Caco-2 (cell line): ENCODE measurements at regions of chr7 and their contacts with region 1.

Region 1: GRCh38 chr7:98294796-98295382 is 13.4 kb downstream of the BRI3 start:
- DNase-seq: peak; percentile 82 to 88
- H3K4me3 ChIP-seq: no peak overlapping the region
- H3K4me3 Mint-ChIP-seq: no peak overlapping the region
- H3K27ac Mint-ChIP-seq: peak overlapping the region; percentile 85
- H3K4me1 ChIP-seq: peaks cover 9% of the 10 kb centered on the region
- H3K4me1 Mint-ChIP-seq: peaks cover 16% of the 10 kb centered on the region
- H3K27me3 ChIP-seq: no peaks in the 10 kb centered on the region
- H3K27me3 Mint-ChIP-seq: no peaks in the 10 kb centered on the region
- CTCF ChIP-seq: peak; percentile 84 to 89

Region 2: GRCh38 chr7:98323597-98324322 is 28.9 kb after region 1 on chr7:
- CTCF ChIA-PET with region 1: no interaction called
- POLR2A ChIA-PET with region 1: no interaction called
- intact Hi-C with region 1: no loop called
- DNase-seq: no peak
- H3K4me3 ChIP-seq: no peak overlapping the region
- H3K4me3 Mint-ChIP-seq: no peak overlapping the region
- H3K27ac Mint-ChIP-seq: peak overlapping the region; percentile 85
- H3K4me1 ChIP-seq: peaks cover 31% of the 10 kb centered on the region
- H3K4me1 Mint-ChIP-seq: peaks cover 41% of the 10 kb centered on the region
- H3K27me3 ChIP-seq: no peaks in the 10 kb centered on the region
- H3K27me3 Mint-ChIP-seq: no peaks in the 10 kb centered on the region
- CTCF ChIP-seq: no peak

Region 3: DNA sequence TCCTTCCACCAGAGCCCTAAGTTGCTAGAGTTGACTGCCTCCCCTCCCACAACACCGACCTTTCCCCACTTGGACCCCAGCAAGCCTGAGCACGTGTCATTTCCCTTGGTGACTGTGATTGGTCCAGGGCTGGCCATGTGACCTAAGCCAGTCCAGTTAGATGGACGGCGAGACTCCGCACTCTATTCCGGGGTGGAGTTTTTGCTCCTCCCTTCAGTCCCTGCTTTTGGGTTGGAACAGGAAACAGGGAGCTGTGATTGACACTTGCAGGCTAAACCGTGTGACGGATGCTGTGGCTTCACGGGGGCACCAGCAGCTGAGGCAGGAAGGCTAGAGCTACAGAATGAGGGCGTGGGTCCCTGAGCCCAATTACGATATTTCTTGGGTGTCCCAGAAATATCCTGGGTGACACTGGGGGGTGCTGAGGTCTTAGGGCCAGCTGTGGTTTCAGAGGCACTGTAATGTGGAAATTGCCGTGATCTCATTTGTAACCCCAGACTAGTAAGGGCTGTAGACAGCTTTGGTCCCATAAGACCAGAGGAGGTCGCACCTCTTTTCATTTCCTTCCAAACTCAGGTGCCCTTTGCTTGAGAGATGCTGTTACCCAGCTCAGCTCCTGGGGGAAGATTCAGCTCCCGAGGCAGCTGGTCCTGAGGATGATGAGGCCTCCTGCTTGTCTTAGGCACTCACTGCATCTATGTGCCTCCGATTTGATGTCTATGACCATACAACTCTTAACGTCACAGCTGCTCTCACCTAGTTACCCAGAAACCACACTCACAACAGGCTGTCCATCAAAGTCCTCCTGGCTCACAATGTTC is 219.5 kb after region 1 on chr7:
- CTCF ChIA-PET with region 1: no interaction called
- POLR2A ChIA-PET with region 1: no interaction called
- intact Hi-C with region 1: no loop called
- DNase-seq: no peak
- H3K4me3 ChIP-seq: no peak overlapping the region
- H3K4me3 Mint-ChIP-seq: no peak overlapping the region
- H3K27ac Mint-ChIP-seq: no peak overlapping the region
- H3K4me1 ChIP-seq: no peaks in the 10 kb centered on the region
- H3K4me1 Mint-ChIP-seq: no peaks in the 10 kb centered on the region
- H3K27me3 ChIP-seq: no peaks in the 10 kb centered on the region
- H3K27me3 Mint-ChIP-seq: peaks cover 3% of the 10 kb centered on the region
- CTCF ChIP-seq: no peak

Region 4: GRCh38 chr7:98745722-98746318 is 450.9 kb after region 1 on chr7:
- CTCF ChIA-PET with region 1: no interaction called
- POLR2A ChIA-PET with region 1: no interaction called
- intact Hi-C with region 1: loop called (anchors 10 kb)
- DNase-seq: peak; percentile 76 to 87
- H3K4me3 ChIP-seq: no peak overlapping the region
- H3K4me3 Mint-ChIP-seq: no peak overlapping the region
- H3K27ac Mint-ChIP-seq: no peak overlapping the region
- H3K4me1 ChIP-seq: no peaks in the 10 kb centered on the region
- H3K4me1 Mint-ChIP-seq: no peaks in the 10 kb centered on the region
- H3K27me3 ChIP-seq: no peaks in the 10 kb centered on the region
- H3K27me3 Mint-ChIP-seq: no peaks in the 10 kb centered on the region
- CTCF ChIP-seq: peak; percentile 88 to 93

Region 5: DNA sequence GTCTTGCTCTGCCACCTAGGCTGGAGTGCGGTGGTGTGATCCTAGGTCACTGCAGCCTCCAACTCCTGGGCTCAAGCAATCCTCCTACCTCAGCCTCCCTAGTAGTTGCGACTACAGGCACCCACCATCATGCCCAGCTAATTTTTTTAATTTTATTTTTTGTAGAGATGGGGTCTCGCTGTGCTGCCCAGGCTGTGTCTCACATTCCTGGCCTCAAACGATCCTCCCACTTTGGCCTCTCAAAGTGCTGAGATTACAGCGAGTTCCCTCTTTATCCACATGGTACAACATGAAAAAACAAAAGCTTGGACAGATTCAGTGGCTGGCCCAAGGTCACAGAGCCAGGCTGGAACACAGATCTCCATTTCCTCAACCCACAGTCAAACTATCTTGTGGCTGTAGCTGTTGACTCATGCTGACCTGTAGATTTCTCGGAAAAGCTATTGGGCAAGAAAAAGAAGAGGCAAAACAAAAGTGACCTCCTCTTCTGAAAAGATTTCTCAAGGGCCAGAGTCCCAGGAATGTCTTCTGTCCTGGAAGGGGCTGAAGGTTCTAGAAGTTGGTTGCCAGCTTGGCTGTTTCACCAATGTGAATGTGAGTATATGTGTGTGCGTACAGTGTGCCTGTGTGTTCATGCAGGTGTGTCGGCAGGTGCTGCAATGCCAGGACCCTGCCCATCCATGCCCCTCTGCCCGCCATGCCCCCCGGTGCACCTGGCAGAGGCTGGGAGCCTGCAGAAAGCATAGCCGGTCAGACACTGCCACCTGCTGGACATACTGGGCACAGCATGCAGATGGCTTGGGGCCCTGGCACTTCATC is 546.5 kb after region 1 on chr7:
- CTCF ChIA-PET with region 1: no interaction called
- POLR2A ChIA-PET with region 1: no interaction called
- intact Hi-C with region 1: loop called (anchors 10 kb)
- DNase-seq: peak; percentile 57 to 76
- H3K4me3 ChIP-seq: no peak overlapping the region
- H3K4me3 Mint-ChIP-seq: no peak overlapping the region
- H3K27ac Mint-ChIP-seq: no peak overlapping the region
- H3K4me1 ChIP-seq: no peaks in the 10 kb centered on the region
- H3K4me1 Mint-ChIP-seq: no peaks in the 10 kb centered on the region
- H3K27me3 ChIP-seq: no peaks in the 10 kb centered on the region
- H3K27me3 Mint-ChIP-seq: peaks cover 2% of the 10 kb centered on the region
- CTCF ChIP-seq: peak; percentile 94 to 98